ENCODE measurements at regions of chr5 and their contacts with region 1.

Region 1: GRCh38 chr5:31809050-31809870 is 170.3 kb downstream of the PDZD2 start:
- DNase-seq: peak; percentile 75
- ATAC-seq: peak; percentile 89 to 96

Region 2: GRCh38 chr5:31581498-31582099 is 227.7 kb before region 1 on chr5:
- intact Hi-C with region 1: loop called (anchors 2 to 5 kb)
- DNase-seq: no peak
- ATAC-seq: peak in 1 of 2 donors; percentile 27

Region 3: DNA sequence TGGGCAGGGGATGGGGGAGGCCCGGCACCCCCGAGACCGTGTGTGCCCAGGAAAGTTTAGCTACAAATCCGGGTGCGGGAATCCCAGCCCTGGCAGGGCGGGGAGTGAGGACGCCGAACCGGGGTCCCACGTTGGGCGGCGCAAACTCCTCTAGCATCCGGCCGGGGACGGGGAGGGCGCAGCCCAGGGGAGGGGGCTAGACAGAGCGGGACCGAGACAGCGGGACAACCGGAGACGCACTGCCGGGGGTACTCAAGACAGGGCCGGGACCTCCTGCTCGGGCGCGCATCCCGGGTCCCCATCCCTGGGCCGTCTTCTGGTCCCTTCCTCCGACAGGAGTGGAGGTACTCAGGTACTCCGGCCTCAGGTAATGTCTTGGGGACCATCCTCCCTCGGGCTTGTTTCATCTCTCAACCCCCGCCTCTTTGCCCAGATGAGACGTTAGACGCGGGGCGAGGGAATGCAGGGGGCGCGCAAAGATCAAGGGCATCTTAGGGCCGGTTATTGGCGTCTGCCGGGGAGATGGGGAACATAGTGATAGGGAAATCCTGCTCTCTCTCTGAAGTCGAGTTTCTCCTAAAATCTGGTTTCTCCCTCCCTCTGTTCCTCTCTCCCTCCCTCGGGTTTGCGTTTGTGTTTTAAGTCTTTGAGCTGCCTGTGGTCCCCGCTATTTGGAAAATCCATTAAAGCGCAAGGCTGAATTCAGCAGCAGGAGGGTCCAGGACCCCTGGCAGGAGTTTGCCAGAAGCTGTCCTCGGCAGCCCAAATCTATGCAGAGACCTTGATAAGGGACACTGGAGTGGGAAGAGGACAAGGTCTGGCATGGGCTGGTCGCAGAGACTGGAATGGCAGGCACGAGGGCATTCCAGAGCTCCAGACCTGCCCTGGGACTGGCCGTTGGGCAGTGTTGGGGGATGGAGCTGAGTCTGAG is 169.5 kb before region 1 on chr5:
- intact Hi-C with region 1: loop called in 1 of 2 experiments (anchors 10 kb)
- DNase-seq: peak; percentile 28
- ATAC-seq: peak; percentile 27 to 41